ENCODE measurements at regions of chr19 and their contacts with region 1.

Region 1: GRCh38 chr19:46265217-46265828 is 31.5 kb upstream of the HIF3A start:
- DNase-seq: peak; percentile 86
- H3K4me3 Mint-ChIP-seq: no peak overlapping the region
- H3K27ac Mint-ChIP-seq: no peak overlapping the region
- H3K4me1 Mint-ChIP-seq: peaks cover 14% of the 10 kb centered on the region
- H3K27me3 Mint-ChIP-seq: peaks cover 27% of the 10 kb centered on the region

Region 2: DNA sequence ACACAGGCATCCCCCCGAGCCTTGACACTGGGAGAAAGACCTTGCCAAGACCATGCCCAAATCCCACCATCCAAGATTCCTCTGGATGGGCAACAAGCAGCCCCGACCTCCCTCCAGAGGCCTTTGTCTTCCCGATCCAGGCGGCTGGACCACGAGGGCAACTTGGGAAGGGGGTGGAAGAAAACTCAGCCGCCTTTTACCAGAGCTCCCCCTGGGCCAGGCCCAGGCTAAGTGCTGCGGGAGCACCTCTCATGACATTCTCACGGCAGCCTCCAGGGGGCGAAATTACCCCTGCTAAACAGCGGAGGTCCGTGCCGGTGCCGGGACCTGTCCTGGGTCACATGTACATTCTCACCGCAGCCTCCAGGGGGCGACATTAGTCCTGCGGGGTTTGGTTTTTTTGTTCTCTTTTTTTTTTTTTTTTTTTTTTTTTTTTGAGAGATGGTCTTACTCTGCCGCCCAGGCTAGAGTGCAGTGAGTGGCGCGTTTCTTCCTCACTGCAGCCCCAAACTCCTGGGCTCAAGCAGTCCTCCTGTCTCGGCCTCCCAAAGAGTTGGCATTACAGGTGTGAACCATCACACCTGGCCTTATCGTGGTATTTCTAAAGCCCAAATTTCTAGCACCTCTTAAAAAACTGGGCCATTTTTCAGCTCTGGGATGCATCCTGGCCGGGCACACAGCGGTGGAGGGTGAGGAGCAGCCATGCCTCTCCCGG is 448.2 kb before region 1 on chr19:
- CTCF ChIA-PET with region 1: no interaction called
- intact Hi-C with region 1: loop called (anchors 10 kb)
- DNase-seq: peak; percentile 99
- H3K4me3 Mint-ChIP-seq: no peak overlapping the region
- H3K27ac Mint-ChIP-seq: no peak overlapping the region
- H3K4me1 Mint-ChIP-seq: peaks cover 10% of the 10 kb centered on the region
- H3K27me3 Mint-ChIP-seq: peaks cover 19% of the 10 kb centered on the region

Region 3: DNA sequence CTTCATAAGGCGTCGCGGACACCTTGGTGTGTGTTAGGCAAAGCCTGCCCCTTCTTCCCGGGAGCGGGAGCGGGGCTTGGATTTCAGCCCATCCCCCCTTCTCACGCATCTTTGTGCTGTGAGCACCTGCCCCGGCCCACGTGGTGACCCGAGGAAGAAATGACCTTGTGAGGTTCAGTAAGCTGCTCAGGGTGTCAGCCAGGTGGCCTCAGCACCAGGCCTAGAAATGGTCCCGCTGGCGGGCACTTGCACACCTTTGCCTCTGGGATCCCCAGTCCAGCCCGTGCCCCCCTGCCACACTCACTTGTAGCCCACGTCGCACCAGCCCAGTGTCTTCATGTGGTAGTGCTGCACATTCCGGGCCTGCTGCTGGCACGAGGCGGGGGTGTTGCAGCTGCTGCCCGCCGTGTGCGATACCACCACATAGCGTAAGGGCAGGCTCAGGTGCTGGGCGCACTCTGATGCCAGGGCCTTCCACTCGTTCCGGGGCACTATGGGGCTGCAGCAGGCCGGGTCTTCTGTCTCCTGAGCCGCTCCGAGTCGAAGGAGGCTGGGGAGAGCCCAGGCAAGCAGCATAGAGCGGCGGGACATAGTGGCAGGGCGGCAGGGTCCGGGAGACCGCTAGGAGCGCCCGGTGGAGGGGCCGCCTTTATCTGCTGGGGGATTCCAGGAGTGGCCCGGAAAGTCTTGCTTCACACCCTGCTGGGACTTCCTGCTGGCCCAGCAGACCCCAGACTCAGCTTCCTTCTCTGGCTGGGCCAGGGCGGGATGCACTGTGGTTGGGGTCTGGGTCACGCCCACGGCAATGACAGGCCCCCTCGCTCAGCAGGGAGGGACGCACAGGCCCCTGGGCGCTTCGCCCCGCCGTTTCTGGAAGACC is 242.7 kb before region 1 on chr19 and contains the start of gene PGLYRP1:
- CTCF ChIA-PET with region 1: interaction called, 43 read pairs
- intact Hi-C with region 1: no loop called
- DNase-seq: no peak
- H3K4me3 Mint-ChIP-seq: no peak within 1 kb of the TSS
- H3K27ac Mint-ChIP-seq: no peak within 1 kb of the TSS
- H3K4me1 Mint-ChIP-seq: peaks cover 9% of the 10 kb centered on the region
- H3K27me3 Mint-ChIP-seq: peaks cover 12% of the 10 kb centered on the region
- total RNA-seq, gene PGLYRP1: not detected

Region 4: DNA sequence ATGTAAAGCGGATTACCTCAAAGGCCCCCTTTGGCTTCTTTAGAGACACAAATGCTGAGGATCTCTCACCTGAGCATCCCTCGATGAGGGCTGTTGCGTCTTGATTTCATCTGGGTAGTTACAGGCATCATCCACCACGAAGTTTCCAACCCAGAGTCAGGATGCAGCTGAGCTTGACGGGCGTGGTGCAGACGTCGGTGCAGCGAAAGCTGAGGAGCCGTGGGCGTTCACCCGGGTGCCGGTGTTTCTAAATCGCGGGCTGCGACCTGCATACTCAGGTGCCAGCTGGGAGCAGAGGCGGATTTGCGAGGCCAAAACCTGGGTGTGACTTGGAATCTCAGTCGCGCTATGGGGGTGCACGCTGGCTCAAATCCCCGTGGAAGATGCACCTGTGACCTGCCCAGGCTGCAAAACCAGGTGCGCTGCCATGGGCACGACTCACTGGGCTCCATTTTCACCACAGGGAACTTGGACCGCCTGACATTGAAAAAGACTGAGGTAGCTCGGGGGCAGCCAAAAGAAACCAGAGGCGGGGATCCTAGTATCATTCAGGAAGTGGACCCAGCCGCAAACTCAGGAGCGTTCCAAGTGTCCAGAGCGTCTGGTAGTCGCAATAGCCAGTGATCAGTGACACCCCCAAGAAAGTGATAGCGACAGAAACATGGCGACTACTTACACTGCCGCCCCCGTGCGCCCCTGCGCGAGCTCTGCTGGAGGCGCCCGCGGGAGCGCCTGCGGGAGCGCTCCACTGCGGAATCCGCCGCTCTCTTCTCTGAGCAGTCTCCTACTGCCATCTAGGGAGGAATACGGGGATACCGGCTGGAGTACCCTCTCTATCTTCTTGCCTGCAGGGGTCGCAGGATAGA is 188.1 kb before region 1 on chr19:
- CTCF ChIA-PET with region 1: interaction called, 33 read pairs
- intact Hi-C with region 1: loop called (anchors 1 kb)
- DNase-seq: peak; percentile 68
- H3K4me3 Mint-ChIP-seq: peak overlapping the region; percentile 14
- H3K27ac Mint-ChIP-seq: no peak overlapping the region
- H3K4me1 Mint-ChIP-seq: peaks cover 11% of the 10 kb centered on the region
- H3K27me3 Mint-ChIP-seq: peaks cover 68% of the 10 kb centered on the region

Region 5: GRCh38 chr19:46181388-46181779 is 83.9 kb before region 1 on chr19:
- CTCF ChIA-PET with region 1: no interaction called
- intact Hi-C with region 1: loop called (anchors 1 kb)
- DNase-seq: peak; percentile 72
- H3K4me3 Mint-ChIP-seq: no peak overlapping the region
- H3K27ac Mint-ChIP-seq: peak overlapping the region; percentile 79
- H3K4me1 Mint-ChIP-seq: peaks cover 42% of the 10 kb centered on the region
- H3K27me3 Mint-ChIP-seq: peaks cover 21% of the 10 kb centered on the region

Region 6: GRCh38 chr19:46283771-46284170 is 18.4 kb after region 1 on chr19:
- CTCF ChIA-PET with region 1: interaction called, 13 read pairs
- intact Hi-C with region 1: no loop called
- DNase-seq: no peak
- H3K4me3 Mint-ChIP-seq: no peak overlapping the region
- H3K27ac Mint-ChIP-seq: no peak overlapping the region
- H3K4me1 Mint-ChIP-seq: no peaks in the 10 kb centered on the region
- H3K27me3 Mint-ChIP-seq: peaks cover 5% of the 10 kb centered on the region

Measured in activated naive CD4-positive, alpha-beta T cell treated with anti-CD3 and anti-CD28 coated beads for 36 hours (primary cell).